H1 (cell line): ENCODE measurements at regions of chr22 and their contacts with region 1.

Region 1: GRCh38 chr22:25959818-25960774 is 209.2 kb upstream of the SEZ6L start:
- DNase-seq: no peak
- H3K4me3 ChIP-seq: no peak overlapping the region
- H3K27ac ChIP-seq: no peak overlapping the region
- H3K4me1 ChIP-seq: no peaks in the 10 kb centered on the region
- H3K27me3 ChIP-seq: no peaks in the 10 kb centered on the region
- CTCF ChIP-seq: peak in 2 of 3 experiments; percentile 58 to 59; a peak in 3 of 4 replicates
- EP300 ChIP-seq: no peak
- POLR2A ChIP-seq: no peak
- RAD21 ChIP-seq: peak; percentile 50 to 64

Region 2: GRCh38 chr22:25845985-25846745 is 113.9 kb before region 1 on chr22:
- CTCF ChIA-PET with region 1: no interaction called
- POLR2A ChIA-PET with region 1: no interaction called
- DNase-seq: peak in 1 of 2 experiments; percentile 35
- H3K4me3 ChIP-seq: no peak overlapping the region
- H3K27ac ChIP-seq: no peak overlapping the region
- H3K4me1 ChIP-seq: peaks cover 0 to 3% (median 1%) of the 10 kb centered on the region in 4 experiments; a peak in 2 of 7 replicates
- H3K27me3 ChIP-seq: no peaks in the 10 kb centered on the region
- CTCF ChIP-seq: no peak
- EP300 ChIP-seq: no peak
- POLR2A ChIP-seq: no peak
- RAD21 ChIP-seq: no peak

Region 3: GRCh38 chr22:25942856-25943411 is 17.2 kb before region 1 on chr22:
- CTCF ChIA-PET with region 1: interaction called, 10 read pairs
- POLR2A ChIA-PET with region 1: interaction called, 3 read pairs
- DNase-seq: no peak
- H3K4me3 ChIP-seq: no peak overlapping the region
- H3K27ac ChIP-seq: no peak overlapping the region
- H3K4me1 ChIP-seq: peaks cover 0 to 13% (median 4%) of the 10 kb centered on the region in 4 experiments; a peak in 5 of 7 replicates
- H3K27me3 ChIP-seq: no peaks in the 10 kb centered on the region; a peak in 1 of 7 replicates
- CTCF ChIP-seq: no peak
- EP300 ChIP-seq: no peak
- POLR2A ChIP-seq: no peak
- RAD21 ChIP-seq: no peak